Left ventricle myocardium superior (tissue), 1 donor: ENCODE measurements at regions of chr2 and their contacts with region 1.

Region 1: DNA sequence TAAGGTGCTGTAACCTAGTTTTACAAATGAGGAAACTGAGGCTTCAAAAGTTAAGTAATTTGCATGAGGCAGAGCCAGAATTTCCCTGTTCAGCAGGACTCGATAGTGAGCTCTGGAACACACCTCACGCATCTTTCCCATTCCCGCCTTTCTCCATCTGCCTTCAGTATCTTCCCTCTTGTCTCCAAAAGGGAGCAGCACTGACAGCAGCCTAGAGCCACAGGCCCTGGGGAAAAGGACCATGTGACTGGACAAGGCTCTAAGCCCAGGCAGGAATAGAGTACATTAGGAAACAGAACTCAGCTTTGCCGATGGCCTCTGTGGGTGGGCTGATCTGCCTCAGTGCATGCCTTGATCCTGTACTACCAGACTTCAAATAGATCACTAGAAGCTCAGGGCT is 21.5 kb downstream of the GPR155 start:
- DNase-seq: no peak
- ATAC-seq: peak; percentile 32

Region 2: DNA sequence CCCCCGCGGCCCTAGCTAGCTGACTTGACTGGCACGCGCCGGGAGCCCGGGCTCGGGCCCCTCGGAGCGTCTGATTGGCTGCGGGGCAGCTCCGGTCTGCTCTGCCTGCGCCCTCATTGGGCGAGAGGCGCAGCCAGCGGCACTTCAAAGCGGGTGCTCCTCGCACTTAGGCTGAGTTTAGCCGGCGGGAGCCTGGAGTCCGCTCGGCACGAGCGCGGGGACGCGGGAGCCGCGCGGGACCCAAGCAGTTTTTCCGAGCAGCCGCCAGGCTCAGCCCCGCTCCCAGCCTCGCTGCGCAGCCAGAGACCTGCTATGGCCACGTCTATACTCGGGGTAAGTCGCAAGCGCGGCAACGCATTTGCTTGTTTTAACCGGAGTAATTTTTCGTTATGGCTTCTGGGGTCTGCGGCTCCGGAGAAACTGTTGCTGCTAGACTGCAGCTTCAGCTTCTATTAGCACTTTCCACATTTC is 130.5 kb before region 1 on chr2 and contains the start of gene SP9:
- intact Hi-C with region 1: no loop called
- DNase-seq: peak; percentile 51
- ATAC-seq: peak; percentile 26
- total RNA-seq, gene SP9: not detected

Region 3: DNA sequence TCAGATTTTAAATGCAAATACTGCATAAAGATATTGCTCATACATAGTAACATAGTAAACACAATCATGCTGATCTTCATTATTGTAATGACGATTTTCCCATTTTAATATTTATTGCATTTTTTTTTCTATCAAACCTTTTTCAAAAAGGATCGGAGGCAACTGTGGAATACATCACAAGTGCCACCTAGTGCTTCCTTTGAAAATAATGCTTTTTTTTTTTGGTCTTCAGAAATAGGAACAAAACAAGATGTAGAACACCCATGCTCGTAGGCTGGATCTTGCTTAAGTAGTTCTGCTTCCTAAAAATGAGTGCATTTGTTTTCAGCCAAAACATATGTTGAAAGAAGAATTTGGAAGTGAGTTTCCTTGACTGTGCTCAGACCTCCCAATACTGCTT is 57.2 kb after region 1 on chr2:
- intact Hi-C with region 1: loop called (anchors 10 kb)
- DNase-seq: no peak
- ATAC-seq: peak; percentile 17

Region 4: DNA sequence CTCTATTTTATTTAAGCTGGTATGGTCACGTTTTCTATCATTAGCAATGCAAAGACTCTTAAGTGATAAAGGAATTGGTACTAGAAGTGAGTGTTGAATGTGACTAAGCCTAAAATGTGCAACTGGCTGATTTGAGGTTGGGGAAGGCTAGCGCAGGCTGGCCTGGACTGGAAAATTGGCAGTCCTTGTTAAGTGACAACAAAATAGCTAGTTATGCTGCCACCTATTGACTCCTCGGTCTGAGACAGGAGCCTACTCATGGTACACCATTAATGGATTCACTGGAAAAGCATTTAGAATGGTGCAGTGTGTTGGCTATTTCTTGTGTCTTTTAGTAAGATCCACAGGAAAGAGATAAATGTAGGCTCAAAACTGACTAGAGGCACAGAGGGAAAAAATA is 138.0 kb after region 1 on chr2:
- intact Hi-C with region 1: loop called (anchors 5 kb)
- DNase-seq: peak; percentile 50
- ATAC-seq: peak; percentile 95

Region 5: GRCh38 chr2:174688079-174688478 is 222.8 kb after region 1 on chr2:
- intact Hi-C with region 1: loop called (anchors 5 kb)
- DNase-seq: no peak
- ATAC-seq: peak; percentile 29